ENCODE measurements at regions of chr3 and their contacts with region 1.

Region 1: DNA sequence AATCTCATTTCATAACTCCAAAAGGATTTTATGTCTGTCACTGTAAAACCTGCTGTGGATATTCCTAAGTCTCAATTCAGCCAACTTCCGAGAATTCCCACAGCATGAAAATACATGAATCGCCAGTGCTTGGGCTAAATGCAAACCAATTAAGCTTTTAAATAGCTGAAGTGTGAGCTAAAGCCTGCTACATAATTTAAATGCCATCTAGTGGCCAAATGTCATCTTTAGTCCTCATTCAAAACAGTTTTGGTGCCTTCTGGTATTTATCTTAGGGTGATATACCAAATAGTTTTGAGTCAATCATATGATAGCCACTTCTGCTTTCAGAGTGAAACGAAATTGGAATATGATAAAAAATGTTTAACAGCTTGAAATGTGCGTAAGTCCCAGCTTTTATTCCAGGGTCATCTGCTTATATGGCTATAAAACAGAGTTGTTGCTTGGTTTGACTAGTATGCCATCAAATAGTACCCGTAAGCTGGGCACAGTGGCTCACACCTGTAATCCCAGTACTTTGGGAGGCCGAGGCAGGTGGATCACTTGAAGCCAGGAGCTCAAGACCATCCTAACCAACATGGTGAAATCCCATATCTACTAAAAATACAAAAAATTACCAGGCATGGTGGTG is 41.8 kb upstream of the CCNL1 start:
- DNase-seq: no peak
- ATAC-seq: peak; percentile 57
- H3K4me3 ChIP-seq: no peak overlapping the region
- H3K27ac ChIP-seq: no peak overlapping the region
- H3K4me1 ChIP-seq: no peaks in the 10 kb centered on the region
- H3K27me3 ChIP-seq: no peaks in the 10 kb centered on the region

Region 2: GRCh38 chr3:157447026-157447694 is 245.4 kb after region 1 on chr3:
- intact Hi-C with region 1: loop called in 1 of 2 experiments (anchors 10 kb)
- DNase-seq: no peak
- ATAC-seq: no peak
- H3K4me3 ChIP-seq: no peak overlapping the region
- H3K27ac ChIP-seq: no peak overlapping the region
- H3K4me1 ChIP-seq: no peaks in the 10 kb centered on the region
- H3K27me3 ChIP-seq: no peaks in the 10 kb centered on the region

Region 3: DNA sequence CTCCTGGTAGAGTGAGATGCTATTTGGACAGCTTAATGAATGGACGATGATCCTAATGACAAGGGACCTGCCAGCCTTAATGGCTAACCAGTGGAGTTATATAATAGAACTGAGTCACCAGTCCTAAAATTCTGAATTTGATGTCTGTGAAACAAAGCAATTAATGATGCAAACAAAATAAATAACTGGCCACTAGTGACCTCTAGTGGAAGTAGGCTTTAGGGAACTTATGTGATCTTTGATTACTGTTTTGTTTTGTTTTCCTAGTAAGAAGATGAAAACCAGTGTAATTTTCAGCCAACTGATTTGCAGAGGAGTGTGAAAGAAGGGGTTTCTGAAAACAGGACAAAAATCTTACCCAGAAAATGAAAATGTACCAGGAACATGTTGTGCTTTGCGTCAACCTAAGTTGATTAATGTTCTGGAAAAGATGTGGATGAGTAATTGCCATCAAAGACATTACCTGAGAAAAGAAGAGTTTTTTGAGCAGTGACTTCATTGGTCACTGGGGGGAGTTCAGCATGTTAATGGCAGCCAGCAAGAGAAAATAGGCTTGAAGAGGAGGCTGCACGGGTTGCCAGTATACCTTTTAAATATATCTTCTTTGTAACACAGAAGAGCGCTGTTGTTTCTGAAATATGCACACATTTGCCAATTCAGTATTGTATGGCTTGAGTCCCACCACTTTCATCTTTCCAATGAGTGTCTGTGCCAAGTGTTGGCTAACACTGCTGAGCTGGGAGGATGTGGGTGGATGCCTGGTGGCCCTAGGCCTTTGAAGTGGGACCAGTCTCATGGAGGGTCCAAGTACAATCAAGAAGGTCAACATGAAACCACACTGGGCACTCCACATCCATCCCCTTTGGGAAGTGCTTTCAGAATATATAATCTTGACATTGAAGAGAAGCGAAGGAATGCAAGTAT is 292.1 kb after region 1 on chr3:
- intact Hi-C with region 1: loop called in 1 of 2 experiments (anchors 10 kb)
- DNase-seq: no peak
- ATAC-seq: peak; percentile 61
- H3K4me3 ChIP-seq: no peak overlapping the region
- H3K27ac ChIP-seq: no peak overlapping the region
- H3K4me1 ChIP-seq: no peaks in the 10 kb centered on the region
- H3K27me3 ChIP-seq: no peaks in the 10 kb centered on the region

Region 4: GRCh38 chr3:157572559-157573270 is 371.0 kb after region 1 on chr3:
- intact Hi-C with region 1: loop called in 1 of 2 experiments (anchors 10 kb)
- DNase-seq: no peak
- ATAC-seq: no peak
- H3K4me3 ChIP-seq: no peak overlapping the region
- H3K27ac ChIP-seq: no peak overlapping the region
- H3K4me1 ChIP-seq: no peaks in the 10 kb centered on the region
- H3K27me3 ChIP-seq: no peaks in the 10 kb centered on the region